Activated T-helper 1 cell treated with anti-CD3 and anti-CD28 coated beads, Interleukin-12 subunit alpha, Interleukin-12 subunit beta, Interleukin-2, Interleukin-4 antibody, amounts not matched to agents 30 ng/mL and 10 ng/mL and 1 ng/mL, durations not matched to agents 14 hours and 24 hours and 36 hours (primary cell): ENCODE measurements at regions of chr20 and their contacts with region 1.

Region 1: GRCh38 chr20:3563548-3564177 is 92.8 kb downstream of the ATRN start:
- DNase-seq: no peak
- H3K4me3 Mint-ChIP-seq: no peak overlapping the region
- H3K27ac Mint-ChIP-seq: no peak overlapping the region
- H3K4me1 Mint-ChIP-seq: no peaks in the 10 kb centered on the region
- H3K27me3 Mint-ChIP-seq: no peaks in the 10 kb centered on the region

Region 2: GRCh38 chr20:3590164-3590563 is 26.5 kb after region 1 on chr20:
- intact Hi-C with region 1: no loop called
- DNase-seq: no peak
- H3K4me3 Mint-ChIP-seq: no peak overlapping the region
- H3K27ac Mint-ChIP-seq: no peak overlapping the region
- H3K4me1 Mint-ChIP-seq: no peaks in the 10 kb centered on the region
- H3K27me3 Mint-ChIP-seq: no peaks in the 10 kb centered on the region

Region 3: GRCh38 chr20:3710703-3711483 is 147.2 kb after region 1 on chr20:
- intact Hi-C with region 1: loop called (anchors 1 kb)
- DNase-seq: peak; percentile 50
- H3K4me3 Mint-ChIP-seq: no peak overlapping the region
- H3K27ac Mint-ChIP-seq: no peak overlapping the region
- H3K4me1 Mint-ChIP-seq: no peaks in the 10 kb centered on the region
- H3K27me3 Mint-ChIP-seq: peaks cover 10% of the 10 kb centered on the region